ENCODE measurements at regions of chr9 and their contacts with region 1.

Region 1: DNA sequence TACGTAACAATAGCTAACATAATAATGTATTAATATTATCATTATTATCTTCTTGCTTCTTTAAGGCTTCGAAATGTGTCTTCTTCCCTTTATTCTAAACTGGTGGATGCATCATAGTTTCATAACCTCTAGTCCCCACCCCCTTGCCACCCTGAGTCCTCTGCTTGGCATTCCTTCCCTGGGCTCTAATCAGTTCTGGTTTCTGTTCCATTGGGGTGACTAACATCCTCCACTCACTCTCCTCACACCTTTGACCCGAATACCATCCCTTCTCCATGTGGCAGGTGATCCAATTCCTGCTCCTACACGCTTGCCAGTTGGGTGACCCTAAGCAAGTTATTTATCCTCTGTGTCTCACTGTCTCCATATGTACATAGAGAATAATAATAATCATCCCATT is 286.1 kb downstream of the TRPM3 start:
- DNase-seq: no peak
- H3K4me3 ChIP-seq: no peak overlapping the region
- H3K27ac ChIP-seq: no peak overlapping the region
- H3K4me1 ChIP-seq: no peaks in the 10 kb centered on the region
- H3K27me3 ChIP-seq: no peaks in the 10 kb centered on the region
- CTCF ChIP-seq: no peak
- POLR2A ChIP-seq: no peak

Region 2: DNA sequence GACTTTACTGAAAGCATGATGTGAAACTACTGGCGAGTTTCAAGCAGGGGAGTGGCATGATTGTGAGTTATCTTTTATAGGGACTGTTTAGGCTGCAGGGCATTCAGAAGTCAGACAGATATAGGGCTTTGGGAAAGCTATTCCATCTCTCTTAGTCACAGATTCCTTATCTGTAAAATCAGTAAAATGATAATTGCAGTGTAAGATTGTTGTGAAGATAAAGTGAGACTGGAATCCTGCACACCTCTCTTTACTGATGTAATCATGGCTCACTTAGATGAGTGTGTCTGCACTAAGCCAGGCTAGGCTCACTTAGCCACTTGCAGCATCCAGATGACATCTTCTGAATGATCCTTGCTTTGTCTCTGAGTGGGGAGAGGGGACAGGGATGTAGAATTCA is 873.5 kb before region 1 on chr9:
- intact Hi-C with region 1: loop called (anchors 5 kb)
- DNase-seq: no peak
- H3K4me3 ChIP-seq: no peak overlapping the region
- H3K27ac ChIP-seq: no peak overlapping the region
- H3K4me1 ChIP-seq: no peaks in the 10 kb centered on the region
- H3K27me3 ChIP-seq: no peaks in the 10 kb centered on the region
- CTCF ChIP-seq: no peak
- POLR2A ChIP-seq: no peak